CD4-positive, alpha-beta memory T cell (primary cell): ENCODE measurements at regions of chr22 and their contacts with region 1.

Region 1: DNA sequence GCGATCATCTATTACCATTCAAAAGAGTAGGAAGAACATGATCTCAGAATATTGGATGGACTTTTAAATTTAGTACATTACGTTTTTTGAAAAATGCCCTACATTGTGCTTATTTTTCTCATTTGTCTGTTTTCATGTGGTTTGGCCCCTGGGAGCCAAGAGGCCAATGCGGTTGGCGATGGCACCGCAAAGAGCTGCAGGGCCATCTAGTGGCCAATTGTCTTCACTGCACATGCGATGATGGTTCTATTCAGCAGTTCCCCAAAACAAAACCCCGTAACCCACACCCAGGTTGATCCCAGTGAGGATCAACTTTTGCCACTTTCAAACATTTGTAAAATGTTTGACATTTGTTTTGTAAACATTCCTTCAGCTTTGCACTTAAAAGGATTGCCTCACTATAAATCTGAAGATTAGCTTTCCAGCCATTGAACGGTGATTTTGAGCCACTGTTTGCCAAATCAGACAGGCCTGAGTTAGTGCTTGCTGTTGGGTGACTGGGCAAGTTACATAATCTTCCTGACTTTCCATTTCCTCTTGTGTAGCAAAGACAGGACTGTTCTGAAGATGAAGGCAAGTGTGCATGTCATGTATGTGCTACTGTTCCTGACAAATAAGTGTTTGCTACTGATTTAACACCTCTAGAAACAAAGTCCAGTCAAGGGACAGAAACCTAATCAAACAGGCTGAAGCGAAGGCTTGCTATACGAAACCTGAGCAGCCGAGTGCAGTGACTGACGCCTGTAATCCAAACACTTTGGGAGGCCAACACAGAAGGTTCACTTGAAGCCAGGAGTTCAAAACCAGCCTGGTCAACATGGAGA is 29.2 kb upstream of the XBP1 start:
- DNase-seq: peak; percentile 69 to 74 (median 71)
- H3K4me3 ChIP-seq: no peak overlapping the region
- H3K4me3 Mint-ChIP-seq: peak overlapping the region in 6 of 8 donors; percentile 33 to 78 (median 62)
- H3K27ac ChIP-seq: no peak overlapping the region
- H3K27ac Mint-ChIP-seq: peak overlapping the region in 5 of 7 donors; percentile 31 to 88 (median 75)
- H3K4me1 ChIP-seq: peaks cover 14% of the 10 kb centered on the region
- H3K4me1 Mint-ChIP-seq: peaks cover 11 to 43% (median 20%) of the 10 kb centered on the region in 4 donors
- H3K27me3 ChIP-seq: no peaks in the 10 kb centered on the region
- H3K27me3 Mint-ChIP-seq: no peaks in the 10 kb centered on the region

Region 2: GRCh38 chr22:28381429-28382167 is 448.0 kb before region 1 on chr22:
- CTCF ChIA-PET with region 1: no interaction called
- POLR2A ChIA-PET with region 1: no interaction called
- intact Hi-C with region 1: no loop called
- DNase-seq: no peak
- H3K4me3 ChIP-seq: no peak overlapping the region
- H3K4me3 Mint-ChIP-seq: no peak overlapping the region
- H3K27ac ChIP-seq: no peak overlapping the region
- H3K27ac Mint-ChIP-seq: no peak overlapping the region
- H3K4me1 ChIP-seq: no peaks in the 10 kb centered on the region
- H3K4me1 Mint-ChIP-seq: no peaks in the 10 kb centered on the region
- H3K27me3 ChIP-seq: no peaks in the 10 kb centered on the region
- H3K27me3 Mint-ChIP-seq: no peaks in the 10 kb centered on the region

Region 3: DNA sequence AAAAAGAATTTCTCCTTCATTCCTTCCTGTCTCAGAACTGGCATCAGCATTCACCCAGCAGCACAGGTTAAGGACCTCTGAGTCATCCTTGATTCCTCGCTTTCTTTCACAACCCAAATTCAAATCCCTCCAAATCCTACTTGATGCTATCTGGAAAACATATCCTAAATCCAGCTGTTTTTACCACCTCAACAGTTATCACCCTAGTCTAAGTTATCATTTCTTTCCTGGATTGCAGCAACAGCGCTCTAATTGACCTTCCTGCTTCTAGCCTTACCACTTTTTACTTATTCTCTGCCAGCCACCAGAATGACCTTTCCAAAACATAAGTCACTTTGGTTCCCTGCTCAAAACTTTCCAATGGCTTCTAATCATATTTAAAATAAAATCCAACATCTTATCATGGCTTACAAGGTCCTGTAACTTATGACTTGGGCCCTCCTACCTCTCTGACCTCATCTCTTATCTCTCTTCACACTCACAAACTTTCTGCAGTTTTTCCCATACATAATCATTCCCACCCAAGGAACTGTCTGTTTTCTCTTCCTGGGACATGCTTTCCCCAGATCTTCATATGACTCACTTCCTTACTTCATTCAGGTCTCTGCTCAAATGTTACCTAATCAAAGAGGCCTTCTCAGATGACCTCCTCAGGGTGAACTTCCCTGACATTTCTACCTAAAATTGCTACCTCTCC is 269.4 kb before region 1 on chr22:
- CTCF ChIA-PET with region 1: no interaction called
- POLR2A ChIA-PET with region 1: no interaction called
- intact Hi-C with region 1: no loop called
- DNase-seq: no peak
- H3K4me3 ChIP-seq: no peak overlapping the region
- H3K4me3 Mint-ChIP-seq: no peak overlapping the region
- H3K27ac ChIP-seq: no peak overlapping the region
- H3K27ac Mint-ChIP-seq: no peak overlapping the region
- H3K4me1 ChIP-seq: no peaks in the 10 kb centered on the region
- H3K4me1 Mint-ChIP-seq: no peaks in the 10 kb centered on the region
- H3K27me3 ChIP-seq: no peaks in the 10 kb centered on the region
- H3K27me3 Mint-ChIP-seq: peaks cover 17 to 20% of the 10 kb centered on the region in 2 donors

Region 4: GRCh38 chr22:28600546-28601143 is 228.9 kb before region 1 on chr22:
- CTCF ChIA-PET with region 1: interaction called, 99 read pairs
- POLR2A ChIA-PET with region 1: interaction called, 3 read pairs
- intact Hi-C with region 1: loop called (anchors 1 kb)
- DNase-seq: peak; percentile 31 to 63 (median 59)
- H3K4me3 ChIP-seq: no peak overlapping the region
- H3K4me3 Mint-ChIP-seq: no peak overlapping the region
- H3K27ac ChIP-seq: no peak overlapping the region
- H3K27ac Mint-ChIP-seq: no peak overlapping the region
- H3K4me1 ChIP-seq: no peaks in the 10 kb centered on the region
- H3K4me1 Mint-ChIP-seq: no peaks in the 10 kb centered on the region
- H3K27me3 ChIP-seq: peaks cover 13% of the 10 kb centered on the region
- H3K27me3 Mint-ChIP-seq: peaks cover 6 to 14% of the 10 kb centered on the region in 2 donors

Region 5: GRCh38 chr22:28810821-28811491 is 18.6 kb before region 1 on chr22:
- CTCF ChIA-PET with region 1: interaction called, 31 read pairs
- POLR2A ChIA-PET with region 1: interaction called, 11 read pairs
- intact Hi-C with region 1: loop called (anchors 2 kb)
- DNase-seq: peak; percentile 49 to 63 (median 60)
- H3K4me3 ChIP-seq: peak overlapping the region in 1 of 2 donors; percentile 29
- H3K4me3 Mint-ChIP-seq: peak overlapping the region; percentile 72 to 88 (median 86)
- H3K27ac ChIP-seq: peak overlapping the region; percentile 31
- H3K27ac Mint-ChIP-seq: peak overlapping the region; percentile 83 to 94 (median 90)
- H3K4me1 ChIP-seq: peaks cover 77% of the 10 kb centered on the region
- H3K4me1 Mint-ChIP-seq: peaks cover 46 to 94% (median 70%) of the 10 kb centered on the region in 4 donors
- H3K27me3 ChIP-seq: no peaks in the 10 kb centered on the region
- H3K27me3 Mint-ChIP-seq: no peaks in the 10 kb centered on the region

Region 6: DNA sequence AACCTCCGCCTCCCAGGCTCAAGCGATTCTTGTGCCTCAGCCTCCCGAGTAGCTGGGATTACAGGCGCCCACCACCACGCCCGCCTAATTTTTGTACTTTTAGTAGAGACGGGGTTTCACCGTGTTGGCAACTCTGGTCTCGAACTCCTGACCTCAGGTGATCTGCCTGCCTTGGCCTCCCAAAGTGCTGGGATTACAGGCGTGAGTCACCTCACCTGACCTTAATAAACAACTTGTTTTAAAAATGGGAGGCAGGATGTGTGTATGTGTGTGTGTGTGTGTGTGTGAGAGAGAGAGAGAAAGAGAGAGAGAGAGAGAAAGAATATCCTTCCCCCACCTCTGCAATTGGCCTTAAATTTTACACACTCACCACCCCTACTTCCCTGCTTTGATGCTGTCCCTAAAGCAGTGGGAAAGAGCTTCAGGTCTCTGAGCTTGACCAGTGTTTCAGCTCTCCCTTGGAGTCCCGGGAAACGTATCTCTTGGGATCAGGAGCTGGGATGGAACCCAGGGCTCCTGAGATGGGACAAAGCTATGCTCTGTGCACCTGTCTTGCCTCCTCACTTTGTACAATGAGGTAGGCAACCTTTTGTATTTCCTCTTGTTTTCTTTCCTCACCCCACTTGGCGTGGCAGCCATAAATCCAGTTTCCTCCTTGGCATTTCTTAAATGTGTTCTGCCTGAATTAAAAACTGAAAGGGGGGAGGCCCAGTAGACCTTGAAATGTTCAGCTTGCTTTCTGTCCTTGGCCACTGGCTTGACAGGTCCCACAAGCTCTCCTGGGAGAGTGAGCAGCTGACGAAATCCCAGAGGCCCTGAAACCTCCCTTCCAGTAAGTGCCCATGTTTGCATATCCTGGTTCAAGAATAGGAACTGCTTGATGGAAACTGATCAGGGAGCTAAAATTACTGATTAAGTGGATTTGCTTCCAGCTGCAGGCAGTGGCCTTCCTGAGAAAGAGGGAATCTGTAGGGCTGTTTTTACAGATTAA is 11.4 kb before region 1 on chr22:
- CTCF ChIA-PET with region 1: interaction called, 31 read pairs
- POLR2A ChIA-PET with region 1: interaction called, 5 read pairs
- intact Hi-C with region 1: no loop called
- DNase-seq: peak in 1 of 5 donors; percentile 20
- H3K4me3 ChIP-seq: no peak overlapping the region
- H3K4me3 Mint-ChIP-seq: peak overlapping the region; percentile 20 to 78 (median 70)
- H3K27ac ChIP-seq: no peak overlapping the region
- H3K27ac Mint-ChIP-seq: peak overlapping the region; percentile 23 to 94 (median 74)
- H3K4me1 ChIP-seq: peaks cover 70% of the 10 kb centered on the region
- H3K4me1 Mint-ChIP-seq: peaks cover 45 to 85% (median 70%) of the 10 kb centered on the region in 4 donors
- H3K27me3 ChIP-seq: no peaks in the 10 kb centered on the region
- H3K27me3 Mint-ChIP-seq: no peaks in the 10 kb centered on the region

Region 7: GRCh38 chr22:29040385-29041275 is 211.1 kb after region 1 on chr22:
- CTCF ChIA-PET with region 1: interaction called, 14 read pairs
- POLR2A ChIA-PET with region 1: no interaction called
- intact Hi-C with region 1: loop called (anchors 1 kb)
- DNase-seq: peak; percentile 62 to 68 (median 67)
- H3K4me3 ChIP-seq: no peak overlapping the region
- H3K4me3 Mint-ChIP-seq: no peak overlapping the region
- H3K27ac ChIP-seq: no peak overlapping the region
- H3K27ac Mint-ChIP-seq: no peak overlapping the region
- H3K4me1 ChIP-seq: no peaks in the 10 kb centered on the region
- H3K4me1 Mint-ChIP-seq: peaks cover 0 to 3% (median 0%) of the 10 kb centered on the region in 4 donors
- H3K27me3 ChIP-seq: no peaks in the 10 kb centered on the region
- H3K27me3 Mint-ChIP-seq: peaks cover 0 to 3% of the 10 kb centered on the region in 2 donors